PC-9 (cell line): ENCODE measurements at regions of chr12 and their contacts with region 1.

Region 1: GRCh38 chr12:104651811-104652210 is 195.1 kb downstream of the CHST11 start:
- DNase-seq: no peak
- H3K4me3 ChIP-seq: no peak overlapping the region
- H3K27ac ChIP-seq: no peak overlapping the region
- H3K4me1 ChIP-seq: peaks cover 4% of the 10 kb centered on the region
- H3K27me3 ChIP-seq: no peaks in the 10 kb centered on the region
- CTCF ChIP-seq: no peak

Region 2: DNA sequence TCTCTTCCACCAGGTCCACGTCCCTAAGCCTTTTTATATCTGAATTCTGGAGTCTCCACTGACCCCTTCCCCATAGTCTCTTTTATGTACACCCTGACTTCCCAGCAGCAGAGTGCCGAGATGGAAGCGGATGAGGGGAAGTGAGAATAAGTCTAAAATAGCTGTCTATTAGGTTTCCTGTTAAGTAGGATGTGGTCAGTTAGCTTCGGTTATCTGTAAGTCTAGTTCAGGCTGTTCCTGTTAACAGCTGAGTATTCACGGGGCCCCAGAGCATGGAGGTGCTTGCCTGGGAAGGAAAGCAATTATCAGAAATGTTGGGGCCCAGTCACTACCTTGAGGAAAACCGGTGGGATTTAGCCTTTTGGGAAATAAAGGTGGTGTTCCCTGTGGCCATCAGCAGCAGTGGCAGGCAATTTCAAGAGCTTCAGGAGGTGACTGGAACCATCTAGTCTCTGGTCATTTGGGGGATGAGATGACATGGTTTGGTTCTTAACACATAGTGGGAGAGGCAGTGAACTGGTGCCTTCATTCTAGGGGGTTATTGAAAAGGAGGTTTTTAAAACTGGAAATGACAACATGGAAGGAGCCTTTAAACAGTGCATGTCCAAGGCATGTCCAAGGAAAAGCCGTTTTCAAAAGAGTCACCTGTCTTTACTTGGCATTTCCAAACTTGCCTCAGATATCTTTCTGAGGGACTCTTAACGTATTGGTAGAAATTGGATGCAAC is 173.3 kb before region 1 on chr12:
- CTCF ChIA-PET with region 1: no interaction called
- POLR2A ChIA-PET with region 1: no interaction called
- intact Hi-C with region 1: no loop called
- DNase-seq: no peak
- H3K4me3 ChIP-seq: no peak overlapping the region
- H3K27ac ChIP-seq: no peak overlapping the region
- H3K4me1 ChIP-seq: peaks cover 25% of the 10 kb centered on the region
- H3K27me3 ChIP-seq: no peaks in the 10 kb centered on the region
- CTCF ChIP-seq: no peak

Region 3: GRCh38 chr12:104825408-104825807 is 173.6 kb after region 1 on chr12:
- CTCF ChIA-PET with region 1: no interaction called
- POLR2A ChIA-PET with region 1: interaction called, 17 read pairs
- intact Hi-C with region 1: no loop called
- DNase-seq: no peak
- H3K4me3 ChIP-seq: no peak overlapping the region
- H3K27ac ChIP-seq: no peak overlapping the region
- H3K4me1 ChIP-seq: no peaks in the 10 kb centered on the region
- H3K27me3 ChIP-seq: no peaks in the 10 kb centered on the region
- CTCF ChIP-seq: 0 out of 2 replicates have a peak, but pooled peaks have one; percentile 28